ENCODE measurements at regions of chr3 and their contacts with region 1.

Region 1: GRCh38 chr3:112979240-112979832 is 4.4 kb upstream of the CD200R1 start:
- DNase-seq: no peak
- H3K4me3 Mint-ChIP-seq: no peak overlapping the region
- H3K27ac Mint-ChIP-seq: no peak overlapping the region
- H3K4me1 Mint-ChIP-seq: peaks cover 56% of the 10 kb centered on the region
- H3K27me3 Mint-ChIP-seq: no peaks in the 10 kb centered on the region

Region 2: DNA sequence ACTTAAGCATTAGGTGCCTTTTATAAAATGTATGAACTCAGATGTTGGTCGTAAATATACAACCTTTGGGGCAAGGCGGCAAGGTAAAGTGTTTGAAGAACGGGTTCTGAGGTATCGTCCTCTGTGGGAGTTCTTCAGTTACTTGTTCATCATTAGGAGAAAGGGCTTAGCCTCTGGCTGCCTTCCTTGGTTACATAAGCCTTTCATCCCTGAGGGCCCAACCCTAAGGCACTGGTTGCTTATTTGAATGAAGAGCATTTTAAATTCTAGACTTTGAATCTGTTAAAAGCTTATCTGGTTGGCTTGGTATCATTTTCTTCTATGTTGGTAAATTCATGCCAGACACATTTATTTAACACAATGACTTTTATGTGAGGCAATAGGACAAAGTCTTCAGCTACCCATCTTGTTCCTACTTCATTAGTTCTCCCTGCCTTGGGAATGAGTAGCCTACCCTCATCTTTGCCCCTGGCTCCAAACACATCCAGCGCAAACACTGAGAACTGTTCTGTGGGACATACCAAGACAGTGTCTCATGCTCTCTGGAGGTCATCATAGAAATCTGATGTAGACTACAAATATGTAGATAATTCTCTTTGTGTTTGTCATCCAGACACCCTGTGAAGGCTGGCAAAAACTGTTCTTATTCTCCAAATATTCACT is 326.0 kb before region 1 on chr3:
- CTCF ChIA-PET with region 1: interaction called, 11 read pairs
- POLR2A ChIA-PET with region 1: no interaction called
- DNase-seq: no peak
- H3K4me3 Mint-ChIP-seq: no peak overlapping the region
- H3K27ac Mint-ChIP-seq: no peak overlapping the region
- H3K4me1 Mint-ChIP-seq: peaks cover 24% of the 10 kb centered on the region
- H3K27me3 Mint-ChIP-seq: no peaks in the 10 kb centered on the region

Region 3: DNA sequence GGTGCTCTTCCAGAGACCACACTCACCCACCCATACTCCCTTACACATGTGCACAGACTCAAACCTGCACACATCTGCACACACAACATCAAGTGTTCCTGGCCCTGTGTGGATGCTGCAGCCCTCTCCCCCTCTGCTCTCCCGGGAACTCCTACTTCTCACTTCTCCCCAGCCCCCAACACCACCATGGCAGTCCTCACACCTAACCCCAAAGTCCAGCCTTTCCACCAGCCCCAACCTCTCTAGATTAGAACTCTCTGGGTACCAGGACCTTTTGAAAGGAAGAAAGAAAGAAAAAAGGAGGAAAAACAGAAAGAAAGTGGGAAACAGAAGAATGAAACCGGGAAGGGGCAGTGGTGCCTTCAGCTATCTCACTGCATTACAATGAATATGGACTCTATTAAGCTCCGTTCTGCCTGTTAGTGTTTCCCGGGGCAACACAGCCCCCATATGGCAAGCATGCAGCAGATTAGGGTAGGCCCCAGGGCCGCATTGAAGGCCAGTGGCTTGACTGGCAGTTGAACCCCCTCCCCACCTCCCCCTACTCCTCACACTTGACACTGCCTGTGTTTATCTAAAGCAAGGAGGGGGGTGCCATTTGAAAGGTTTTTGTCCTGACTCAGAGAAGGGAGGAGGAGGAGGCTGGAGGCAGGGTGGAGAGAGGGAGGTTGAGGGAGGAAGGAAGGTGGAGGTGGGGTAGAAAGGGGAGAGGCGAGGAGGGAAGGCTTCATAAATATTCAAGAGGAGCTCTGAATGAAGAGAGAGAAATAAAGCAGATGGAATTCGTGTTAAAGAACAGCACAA is 262.2 kb after region 1 on chr3:
- CTCF ChIA-PET with region 1: no interaction called
- POLR2A ChIA-PET with region 1: no interaction called
- DNase-seq: no peak
- H3K4me3 Mint-ChIP-seq: no peak overlapping the region
- H3K27ac Mint-ChIP-seq: no peak overlapping the region
- H3K4me1 Mint-ChIP-seq: peaks cover 8% of the 10 kb centered on the region
- H3K27me3 Mint-ChIP-seq: peaks cover 41% of the 10 kb centered on the region